Mammary epithelial cell (primary cell): ENCODE measurements at regions of chr15 and their contacts with region 1.

Region 1: DNA sequence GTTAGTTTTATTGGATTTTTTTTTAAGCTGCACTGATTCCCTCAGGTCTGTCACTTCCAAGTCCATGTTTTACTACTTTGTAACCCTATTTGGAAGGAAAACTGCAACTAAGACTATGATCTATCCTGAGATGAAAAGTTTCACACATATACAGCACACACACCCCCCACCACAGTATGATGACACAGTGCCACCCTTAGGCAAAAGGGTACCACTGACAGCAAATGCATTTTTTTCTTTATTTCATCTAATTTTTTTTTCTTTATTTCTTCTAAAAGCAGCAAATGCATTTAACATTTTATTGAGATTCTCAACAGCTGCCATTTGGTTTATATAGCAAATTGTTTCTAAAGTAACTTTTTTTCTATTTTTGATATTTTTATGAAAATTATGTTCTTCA is 21.2 kb downstream of the NGRN start:
- DNase-seq: no peak
- H3K4me3 ChIP-seq: no peak overlapping the region
- H3K27ac ChIP-seq: no peak overlapping the region
- H3K4me1 ChIP-seq: no peaks in the 10 kb centered on the region
- H3K27me3 ChIP-seq: no peaks in the 10 kb centered on the region
- CTCF ChIP-seq: peak; percentile 15 to 38

Region 2: GRCh38 chr15:90143166-90143655 is 143.5 kb before region 1 on chr15:
- CTCF ChIA-PET with region 1: no interaction called
- dilution Hi-C with region 1: no loop called
- in situ Hi-C with region 1: no loop called
- intact Hi-C with region 1: loop called (anchors 1 kb)
- DNase-seq: peak; percentile 48
- H3K4me3 ChIP-seq: no peak overlapping the region
- H3K27ac ChIP-seq: no peak overlapping the region
- H3K4me1 ChIP-seq: peaks cover 10% of the 10 kb centered on the region
- H3K27me3 ChIP-seq: no peaks in the 10 kb centered on the region
- CTCF ChIP-seq: peak; percentile 56 to 78

Region 3: GRCh38 chr15:90402230-90402629 is 115.6 kb after region 1 on chr15:
- CTCF ChIA-PET with region 1: no interaction called
- dilution Hi-C with region 1: no loop called
- in situ Hi-C with region 1: no loop called
- intact Hi-C with region 1: no loop called
- DNase-seq: peak; percentile 80
- H3K4me3 ChIP-seq: no peak overlapping the region
- H3K27ac ChIP-seq: peak overlapping the region; percentile 95
- H3K4me1 ChIP-seq: peaks cover 41% of the 10 kb centered on the region
- H3K27me3 ChIP-seq: no peaks in the 10 kb centered on the region
- CTCF ChIP-seq: no peak

Region 4: DNA sequence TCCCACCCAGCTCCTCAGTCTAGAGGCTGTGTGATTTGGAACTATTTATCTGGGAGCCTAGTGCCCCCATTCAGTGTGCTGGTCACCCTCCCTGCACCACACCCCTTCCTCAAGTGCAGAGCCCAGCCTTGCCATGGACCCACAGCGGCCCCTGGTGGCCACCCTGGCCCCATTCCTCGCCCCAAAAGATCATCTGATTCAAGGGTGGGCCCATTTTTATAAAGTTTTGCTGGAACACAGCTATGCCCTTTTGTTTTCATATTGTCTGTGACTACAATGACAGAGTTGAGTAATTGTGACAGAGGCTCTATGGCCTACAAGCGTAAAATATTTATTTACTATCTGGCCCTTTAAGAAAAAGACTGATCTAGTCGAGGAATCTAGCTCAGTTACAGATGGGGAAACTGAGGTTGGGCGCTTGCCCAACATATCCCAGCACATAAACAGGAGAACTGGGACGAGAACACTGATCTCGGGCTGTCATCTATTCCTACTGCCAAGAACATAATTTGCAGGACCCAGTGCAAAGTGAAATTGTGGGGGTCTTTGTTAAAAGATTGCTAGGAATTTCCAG is 599.5 kb after region 1 on chr15:
- CTCF ChIA-PET with region 1: no interaction called
- dilution Hi-C with region 1: no loop called
- in situ Hi-C with region 1: no loop called
- intact Hi-C with region 1: no loop called
- DNase-seq: no peak
- H3K4me3 ChIP-seq: no peak overlapping the region
- H3K27ac ChIP-seq: no peak overlapping the region
- H3K4me1 ChIP-seq: no peaks in the 10 kb centered on the region
- H3K27me3 ChIP-seq: no peaks in the 10 kb centered on the region
- CTCF ChIP-seq: peak; percentile 93 to 99